ENCODE measurements at regions of chr5 and their contacts with region 1.

Region 1: DNA sequence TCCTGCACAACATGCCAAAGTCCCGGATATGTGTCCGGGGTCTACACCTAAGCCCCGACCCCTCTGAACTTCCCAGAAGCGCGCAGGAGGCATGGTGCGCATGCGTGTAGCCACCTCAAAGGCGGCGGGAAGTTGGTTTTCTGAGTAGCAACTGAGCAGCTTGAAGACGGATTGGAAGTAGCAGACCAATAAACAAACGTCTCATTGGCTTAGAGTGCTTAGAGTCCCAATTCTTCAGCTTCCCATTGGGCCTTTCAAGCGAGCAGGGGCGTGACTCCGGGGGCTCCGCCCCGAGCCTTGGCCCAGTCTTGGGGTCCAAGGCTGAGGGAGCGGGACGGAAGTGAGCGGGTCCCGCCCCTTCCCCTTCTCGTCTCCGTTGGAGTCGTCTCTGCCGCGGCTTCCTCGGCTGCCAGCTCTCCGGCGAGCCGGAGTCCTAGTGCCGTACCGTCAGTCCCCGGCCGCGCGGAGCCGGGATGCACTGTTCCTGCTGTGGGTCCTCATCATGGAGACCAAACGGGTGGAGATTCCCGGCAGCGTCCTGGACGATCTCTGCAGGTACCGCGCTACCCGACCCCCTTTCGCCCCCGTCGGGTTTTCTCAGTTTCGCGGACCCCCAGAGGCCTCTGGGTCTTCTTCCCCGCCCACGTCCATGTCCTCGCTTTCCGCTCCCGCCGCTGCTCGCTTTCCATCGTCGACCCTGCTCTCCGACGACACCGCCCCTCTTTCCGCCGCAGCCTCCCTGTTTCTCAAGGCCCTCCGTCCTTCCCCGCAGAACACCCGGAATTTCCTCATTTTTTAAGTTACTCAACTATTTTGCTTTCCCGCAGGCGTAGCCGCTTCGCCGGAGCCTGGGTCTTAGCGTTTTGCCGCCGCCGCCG is at the start of gene DCP2:
- DNase-seq: peak; percentile 89 to 97
- H3K4me3 ChIP-seq: peak within 1 kb of the TSS; percentile 94 to 96
- H3K27ac ChIP-seq: peak within 1 kb of the TSS; percentile 87 to 92
- H3K4me1 ChIP-seq: peaks cover 0 to 21% of the 10 kb centered on the region in 2 donors
- H3K27me3 ChIP-seq: no peaks in the 10 kb centered on the region
- CTCF ChIP-seq: no peak
- total RNA-seq, gene DCP2: 24.6 TPM

Region 2: DNA sequence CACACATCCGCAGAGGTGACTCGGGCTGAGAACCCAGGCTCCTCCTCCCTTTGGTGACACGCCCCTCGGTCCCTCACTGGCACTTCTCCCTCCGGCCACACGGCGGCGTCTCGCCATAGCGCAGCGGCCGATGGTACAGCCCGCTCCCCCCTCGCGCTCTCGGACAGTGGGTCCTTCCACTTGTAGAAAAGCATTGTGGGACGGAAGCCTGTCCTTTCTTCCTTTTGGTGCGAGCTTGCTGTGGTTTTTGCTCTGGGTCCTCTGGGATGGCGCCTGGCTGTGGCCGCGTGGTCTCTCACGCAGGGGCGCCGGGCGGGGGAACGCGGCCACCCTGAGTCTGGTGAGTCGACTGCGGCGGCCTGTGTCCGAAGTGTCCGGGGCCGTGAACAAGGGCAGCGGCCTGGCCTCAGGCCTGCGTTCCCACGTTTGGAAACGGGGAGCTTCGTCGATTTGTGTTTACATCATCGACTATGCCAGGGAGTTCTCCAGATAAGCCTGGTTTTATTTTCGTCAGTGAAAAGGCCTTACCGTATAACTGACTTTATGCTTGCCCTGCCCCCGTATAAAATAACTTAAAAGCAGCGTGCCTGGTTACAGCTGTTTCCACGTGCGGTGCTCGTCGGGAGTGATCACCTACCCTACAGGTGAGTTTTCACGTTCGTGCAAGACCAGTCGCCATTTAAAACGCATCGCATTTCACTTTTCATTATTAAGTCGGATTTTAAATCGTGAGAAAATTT is 815.8 kb before region 1 on chr5:
- intact Hi-C with region 1: loop called (anchors 5 kb)
- DNase-seq: peak; percentile 70 to 96
- H3K4me3 ChIP-seq: peak overlapping the region; percentile 69 to 78
- H3K27ac ChIP-seq: peak overlapping the region; percentile 64 to 77
- H3K4me1 ChIP-seq: peaks cover 4 to 14% of the 10 kb centered on the region in 2 donors
- H3K27me3 ChIP-seq: no peaks in the 10 kb centered on the region
- CTCF ChIP-seq: peak; percentile 94 to 95 (median 95)

Region 3: DNA sequence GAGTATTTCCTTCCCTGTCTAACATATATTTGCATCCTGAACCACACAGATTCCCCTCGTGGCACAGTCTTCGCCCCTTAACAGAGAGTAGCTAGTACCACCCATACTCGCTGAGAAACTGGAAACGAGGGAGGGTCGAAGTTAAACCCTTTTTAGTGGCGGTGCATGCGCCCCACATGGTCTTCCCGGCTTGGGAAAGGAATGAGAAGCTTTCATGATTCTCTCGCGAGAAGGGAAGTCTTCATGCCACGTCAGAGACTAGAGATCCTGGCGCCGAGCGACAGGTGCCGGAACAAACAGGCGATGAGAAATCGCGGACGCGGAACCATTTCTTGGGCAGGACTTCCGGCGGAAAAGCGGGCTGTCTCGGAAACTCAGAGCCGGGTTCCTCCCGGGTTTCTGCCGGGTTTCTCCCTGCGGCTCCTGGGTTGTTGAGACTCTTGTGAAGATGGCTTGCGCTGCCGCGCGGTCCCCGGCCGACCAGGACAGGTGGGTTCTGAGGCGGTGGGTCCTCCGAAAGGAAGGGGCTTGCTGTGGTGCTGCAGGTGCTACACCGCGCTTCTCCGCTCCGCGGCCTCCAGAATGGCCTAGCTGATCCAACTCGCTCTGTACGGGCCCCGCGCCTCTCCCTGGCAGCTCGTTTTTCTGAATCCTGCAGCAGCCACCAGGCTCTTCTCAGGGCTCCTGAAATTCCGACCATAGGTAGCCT is 115.6 kb before region 1 on chr5 and contains the start of gene SRP19:
- intact Hi-C with region 1: loop called (anchors 1 kb)
- DNase-seq: peak; percentile 78 to 97
- H3K4me3 ChIP-seq: peak within 1 kb of the TSS; percentile 92 to 98
- H3K27ac ChIP-seq: peak within 1 kb of the TSS; percentile 77 to 87
- H3K4me1 ChIP-seq: peaks cover 0 to 14% of the 10 kb centered on the region in 2 donors
- H3K27me3 ChIP-seq: no peaks in the 10 kb centered on the region
- CTCF ChIP-seq: no peak
- total RNA-seq, gene SRP19: 76.6 TPM

Region 4: GRCh38 chr5:112921833-112922817 is 54.5 kb before region 1 on chr5 and contains the start of gene REEP5:
- intact Hi-C with region 1: loop called (anchors 2 kb)
- DNase-seq: peak; percentile 40 to 90
- H3K4me3 ChIP-seq: peak within 1 kb of the TSS; percentile 93 to 94
- H3K27ac ChIP-seq: peak within 1 kb of the TSS; percentile 97 to 99
- H3K4me1 ChIP-seq: peaks cover 8 to 33% of the 10 kb centered on the region in 2 donors
- H3K27me3 ChIP-seq: no peaks in the 10 kb centered on the region
- CTCF ChIP-seq: peak; percentile 40 to 90 (median 59)
- total RNA-seq, gene REEP5: 49.7 TPM

Region 5: DNA sequence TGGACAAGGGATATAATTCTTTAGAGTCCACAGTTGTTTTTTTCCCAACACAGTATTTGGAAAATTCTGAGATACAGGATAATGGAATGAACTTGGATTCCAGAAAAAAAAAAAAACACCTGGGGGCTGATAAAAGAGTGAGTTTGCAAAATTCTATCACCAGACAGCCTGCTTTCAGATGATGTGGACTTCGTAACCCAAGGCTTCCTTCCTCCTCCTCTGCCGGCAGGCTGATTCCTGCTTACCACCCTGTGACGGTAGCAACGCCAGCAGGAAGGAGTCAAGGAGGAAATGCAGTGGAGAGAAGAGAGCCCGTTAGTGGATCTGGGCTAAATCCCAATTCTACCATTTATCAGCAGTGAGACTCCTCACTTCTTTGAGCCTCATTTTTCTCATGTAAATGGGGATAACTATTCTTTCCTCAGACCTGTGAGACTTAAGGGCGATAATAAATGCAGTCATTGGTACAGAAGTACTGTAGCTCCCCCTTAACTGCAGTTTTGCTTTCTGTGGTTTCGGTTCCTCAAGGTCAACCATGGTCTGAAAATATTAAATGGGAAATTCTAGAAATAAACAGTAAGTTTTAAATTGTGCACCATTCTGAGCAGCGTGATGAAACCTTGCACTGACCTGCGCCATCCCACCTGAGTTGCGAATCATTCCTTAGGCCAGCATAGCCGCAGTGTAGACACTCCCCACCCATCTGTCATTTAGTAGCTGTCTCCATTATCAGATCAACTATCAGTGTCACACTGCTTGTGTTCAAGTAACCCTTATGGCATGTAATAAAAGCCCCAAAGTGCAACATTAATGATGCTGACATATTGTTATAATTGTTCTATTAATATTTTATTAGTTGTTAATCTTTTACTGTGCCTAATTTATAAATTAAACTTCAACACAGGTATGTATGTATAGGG is 71.3 kb after region 1 on chr5:
- intact Hi-C with region 1: no loop called
- DNase-seq: no peak
- H3K4me3 ChIP-seq: no peak overlapping the region
- H3K27ac ChIP-seq: no peak overlapping the region
- H3K4me1 ChIP-seq: peaks cover 4 to 16% of the 10 kb centered on the region in 2 donors
- H3K27me3 ChIP-seq: no peaks in the 10 kb centered on the region
- CTCF ChIP-seq: no peak

Region 6: DNA sequence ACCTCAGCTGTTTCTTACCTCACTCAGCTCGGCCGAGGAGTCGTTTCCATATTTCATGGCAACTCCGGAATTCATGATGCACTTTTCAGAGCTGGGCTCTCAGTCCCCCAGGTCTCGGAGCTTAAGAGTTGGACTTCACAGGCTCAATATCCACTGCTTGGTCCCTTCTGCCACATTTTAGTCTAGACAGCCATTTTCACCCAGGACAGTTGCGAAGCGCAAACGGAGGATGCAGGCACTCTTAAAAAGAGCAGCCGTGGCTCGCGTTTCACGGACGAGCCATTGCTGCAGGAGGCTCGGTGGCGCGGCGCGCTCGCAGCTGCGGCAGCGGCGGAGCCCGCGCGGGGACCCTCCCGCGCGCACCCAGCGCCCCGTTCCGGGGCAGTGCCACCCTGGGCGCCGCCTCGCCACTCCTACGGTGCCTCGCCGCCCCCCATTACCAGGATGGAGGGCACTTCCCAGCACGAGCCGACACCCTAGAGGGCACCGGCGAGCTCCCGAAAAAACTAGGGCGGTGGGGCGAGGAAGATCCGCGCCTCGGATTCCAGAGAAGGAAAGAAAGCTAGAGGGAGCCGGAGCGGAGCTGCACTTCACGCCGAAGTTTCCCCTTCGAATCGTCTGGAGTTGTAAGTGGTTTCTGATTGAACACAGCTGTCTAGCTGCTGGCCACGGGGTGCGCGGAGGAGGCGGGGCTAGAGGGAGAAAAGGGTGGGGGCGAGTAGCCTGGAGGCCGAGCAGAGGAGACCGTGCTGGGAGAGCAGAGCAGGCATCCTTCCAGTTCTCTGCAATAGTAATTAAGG is 317.8 kb after region 1 on chr5:
- intact Hi-C with region 1: loop called (anchors 10 kb)
- DNase-seq: peak; percentile 66 to 90
- H3K4me3 ChIP-seq: peak overlapping the region; percentile 80 to 87
- H3K27ac ChIP-seq: peak overlapping the region; percentile 74 to 94
- H3K4me1 ChIP-seq: peaks cover 0 to 6% of the 10 kb centered on the region in 2 donors
- H3K27me3 ChIP-seq: no peaks in the 10 kb centered on the region
- CTCF ChIP-seq: peak in 1 of 3 experiments; percentile 6

Region 7: DNA sequence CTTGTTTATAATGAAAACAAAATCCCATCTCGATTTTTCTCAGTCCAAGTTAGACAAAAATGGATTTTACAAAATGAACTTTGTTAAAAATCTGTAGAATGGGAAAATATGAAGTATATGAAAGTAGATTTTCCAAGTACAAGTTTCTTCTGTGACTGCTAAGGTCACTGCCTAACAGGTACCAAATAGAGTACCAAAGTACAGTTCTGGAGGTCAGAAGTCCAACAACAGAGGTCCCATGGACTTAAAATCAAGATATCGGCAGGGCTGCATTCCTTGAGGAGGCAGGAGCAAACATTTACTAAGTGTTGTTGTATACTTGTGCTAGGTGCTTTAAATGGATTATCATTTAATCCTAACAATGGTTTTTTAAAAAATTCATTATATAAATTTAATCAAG is 542.7 kb after region 1 on chr5:
- intact Hi-C with region 1: loop called (anchors 5 kb)
- DNase-seq: no peak
- H3K4me3 ChIP-seq: no peak overlapping the region
- H3K27ac ChIP-seq: no peak overlapping the region
- H3K4me1 ChIP-seq: peaks cover 0 to 5% of the 10 kb centered on the region in 2 donors
- H3K27me3 ChIP-seq: no peaks in the 10 kb centered on the region
- CTCF ChIP-seq: no peak

Measured in ascending aorta (tissue), 2 donors.